Aorta (tissue), 5 donors: ENCODE measurements at regions of chr10 and their contacts with region 1.

Region 1: GRCh38 chr10:14478604-14479003 is 147.9 kb upstream of the FRMD4A start:
- DNase-seq: peak; percentile 75 to 83
- ATAC-seq: peak; percentile 75
- H3K4me3 ChIP-seq: no peak overlapping the region
- H3K27ac ChIP-seq: no peak overlapping the region
- H3K4me1 ChIP-seq: no peaks in the 10 kb centered on the region
- H3K27me3 ChIP-seq: no peaks in the 10 kb centered on the region

Region 2: GRCh38 chr10:13787015-13787421 is 691.6 kb before region 1 on chr10:
- intact Hi-C with region 1: loop called (anchors 5 to 10 kb)
- DNase-seq: peak; percentile 51 to 76
- ATAC-seq: no peak
- H3K4me3 ChIP-seq: no peak overlapping the region
- H3K27ac ChIP-seq: no peak overlapping the region
- H3K4me1 ChIP-seq: no peaks in the 10 kb centered on the region
- H3K27me3 ChIP-seq: no peaks in the 10 kb centered on the region

Region 3: GRCh38 chr10:14195433-14195832 is 283.2 kb before region 1 on chr10:
- intact Hi-C with region 1: loop called (anchors 1 to 5 kb)
- DNase-seq: no peak
- ATAC-seq: no peak
- H3K4me3 ChIP-seq: no peak overlapping the region
- H3K27ac ChIP-seq: no peak overlapping the region
- H3K4me1 ChIP-seq: no peaks in the 10 kb centered on the region
- H3K27me3 ChIP-seq: no peaks in the 10 kb centered on the region

Region 4: GRCh38 chr10:14200698-14201544 is 277.7 kb before region 1 on chr10:
- intact Hi-C with region 1: loop called (anchors 1 to 5 kb)
- DNase-seq: no peak
- ATAC-seq: no peak
- H3K4me3 ChIP-seq: no peak overlapping the region
- H3K27ac ChIP-seq: no peak overlapping the region
- H3K4me1 ChIP-seq: no peaks in the 10 kb centered on the region
- H3K27me3 ChIP-seq: no peaks in the 10 kb centered on the region

Region 5: DNA sequence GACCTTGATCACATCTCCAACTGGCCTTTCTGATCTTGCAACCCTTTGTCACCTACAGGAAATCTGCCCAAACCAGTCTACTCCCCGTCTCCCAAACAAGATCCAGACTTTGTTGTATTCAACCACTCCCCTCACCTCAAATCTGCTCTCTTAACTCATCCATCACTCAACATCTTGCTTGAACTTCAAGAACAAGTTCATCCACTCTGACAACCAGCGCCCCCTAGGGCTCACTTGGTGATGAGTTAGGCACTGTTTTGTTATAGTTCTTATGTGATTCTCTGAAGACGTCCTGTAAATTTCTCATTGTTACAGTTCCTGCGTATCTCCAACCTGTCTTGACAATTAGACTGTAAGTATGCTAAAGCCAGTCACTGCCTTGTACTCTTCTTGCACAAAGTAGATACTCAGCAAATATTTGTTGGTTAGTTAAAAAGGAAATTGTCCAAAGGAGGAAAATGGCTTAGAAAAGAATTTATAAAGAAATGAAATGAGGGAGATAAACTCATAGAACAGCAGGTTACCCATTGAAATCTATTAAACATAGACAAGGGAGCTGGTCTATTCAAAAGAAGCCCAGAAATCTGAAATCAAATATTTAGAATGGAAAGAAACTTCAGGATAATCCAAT is 153.2 kb before region 1 on chr10:
- intact Hi-C with region 1: loop called in 1 of 2 experiments (anchors 10 kb)
- DNase-seq: peak; percentile 55 to 80
- ATAC-seq: no peak
- H3K4me3 ChIP-seq: no peak overlapping the region
- H3K27ac ChIP-seq: no peak overlapping the region
- H3K4me1 ChIP-seq: no peaks in the 10 kb centered on the region
- H3K27me3 ChIP-seq: no peaks in the 10 kb centered on the region